AG04449 (cell line): ENCODE measurements at regions of chr9 and their contacts with region 1.

Region 1: DNA sequence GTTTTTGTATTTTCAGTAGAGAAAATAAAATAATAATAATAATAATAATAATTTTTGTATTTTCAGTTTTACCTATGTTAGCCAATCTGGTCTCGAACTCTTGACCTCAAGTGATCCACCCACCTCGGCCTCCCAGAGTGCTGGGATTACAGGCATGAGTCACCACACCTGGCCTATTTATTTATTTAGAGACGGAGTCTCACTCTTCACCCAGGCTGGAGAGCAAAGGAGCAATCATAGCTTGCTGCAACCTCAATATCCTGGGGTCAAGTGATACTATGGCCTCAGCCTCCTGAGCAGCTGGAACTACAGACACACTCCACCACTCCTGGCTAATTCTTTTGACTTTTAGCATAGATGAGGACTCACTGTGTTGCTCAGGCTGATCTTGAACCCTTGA is 167.5 kb downstream of the TLE1 start:
- DNase-seq: no peak
- H3K4me3 ChIP-seq: no peak overlapping the region
- CTCF ChIP-seq: no peak

Region 2: DNA sequence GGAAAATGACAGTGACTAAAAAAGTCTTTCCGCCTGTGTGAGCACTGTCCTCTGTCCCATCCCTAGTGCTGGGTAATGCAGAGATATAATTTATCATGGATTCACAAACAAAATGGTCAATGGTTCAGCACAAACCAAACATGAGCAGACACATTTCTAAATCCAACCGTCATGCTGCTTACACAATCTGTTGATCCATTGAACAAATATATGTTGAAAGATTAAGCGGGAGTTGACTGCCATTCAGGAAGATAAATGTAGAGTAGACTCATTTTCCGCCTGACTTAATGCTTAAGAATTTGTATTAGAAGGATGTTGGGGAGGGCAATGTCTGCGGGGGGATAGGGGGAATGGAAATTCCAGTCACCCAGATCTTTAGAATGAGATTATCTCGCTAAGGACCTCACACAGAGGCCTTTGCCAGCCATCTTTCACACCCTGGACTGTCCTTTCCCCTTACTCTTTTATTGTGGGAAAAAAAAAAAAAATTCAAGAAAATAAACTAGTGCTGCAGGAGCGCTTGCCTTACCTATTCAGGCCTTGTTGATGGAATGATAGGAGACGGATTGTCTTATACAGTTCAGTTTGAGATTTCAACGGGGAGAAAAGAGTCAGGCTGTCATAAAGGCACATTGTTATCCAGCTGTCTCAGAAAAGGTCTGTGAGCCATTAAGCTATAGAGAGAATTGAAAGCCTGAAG is 13.8 kb after region 1 on chr9:
- CTCF ChIA-PET with region 1: interaction called, 26 read pairs
- POLR2A ChIA-PET with region 1: no interaction called
- DNase-seq: no peak
- H3K4me3 ChIP-seq: no peak overlapping the region
- CTCF ChIP-seq: no peak

Region 3: DNA sequence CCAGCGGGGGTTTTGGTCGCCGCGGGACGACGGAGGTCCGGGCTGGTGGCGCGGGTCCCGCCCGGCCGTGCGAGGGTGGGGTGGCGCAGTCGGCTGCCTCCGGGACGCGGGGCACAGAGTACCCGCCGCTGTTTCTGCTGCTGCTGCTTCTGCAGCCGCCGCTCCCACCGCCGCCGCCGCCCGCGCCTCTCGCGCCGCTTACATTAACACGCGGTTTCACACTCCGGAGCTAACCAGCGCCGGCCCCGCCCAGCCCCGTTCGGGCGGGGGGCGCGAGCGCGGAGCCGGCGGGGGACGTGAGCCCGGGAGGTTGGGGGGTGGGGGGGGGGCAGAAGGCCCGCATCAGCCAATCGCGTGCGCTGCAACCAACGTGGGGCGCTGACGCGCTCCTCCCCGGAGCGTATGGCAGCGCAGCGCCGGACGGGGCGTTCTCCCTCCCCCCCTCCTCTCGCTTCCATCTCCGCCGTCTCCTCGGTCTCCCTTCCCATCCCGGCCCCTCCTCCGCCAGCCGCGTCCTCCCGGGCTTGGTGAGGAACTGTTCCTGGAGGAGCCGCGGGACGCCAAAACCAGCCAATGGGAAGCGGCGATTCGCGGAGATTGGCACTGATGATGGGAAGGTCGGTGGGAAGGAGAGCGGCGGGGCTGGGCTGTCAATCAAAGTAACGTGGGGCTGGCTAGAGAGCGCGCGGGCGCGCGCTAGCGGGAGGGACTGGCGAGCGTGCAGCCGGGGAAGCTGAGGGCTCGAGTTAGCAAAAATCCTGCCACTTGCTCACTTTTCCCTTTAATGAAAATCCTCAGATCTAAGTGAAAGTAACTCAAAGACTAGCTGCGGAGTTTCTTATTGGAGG is 167.7 kb after region 1 on chr9 and contains the start of gene TLE1:
- CTCF ChIA-PET with region 1: interaction called, 33 read pairs
- POLR2A ChIA-PET with region 1: no interaction called
- DNase-seq: peak; percentile 95
- H3K4me3 ChIP-seq: peak within 1 kb of the TSS; percentile 62
- CTCF ChIP-seq: no peak

Region 4: GRCh38 chr9:81848472-81848871 is 326.6 kb after region 1 on chr9:
- CTCF ChIA-PET with region 1: interaction called, 14 read pairs
- POLR2A ChIA-PET with region 1: no interaction called
- DNase-seq: no peak
- H3K4me3 ChIP-seq: no peak overlapping the region
- CTCF ChIP-seq: peak; percentile 37

Region 5: GRCh38 chr9:81964218-81965171 is 442.6 kb after region 1 on chr9:
- CTCF ChIA-PET with region 1: no interaction called
- POLR2A ChIA-PET with region 1: no interaction called
- DNase-seq: peak; percentile 3
- H3K4me3 ChIP-seq: no peak overlapping the region
- CTCF ChIP-seq: no peak

Region 6: DNA sequence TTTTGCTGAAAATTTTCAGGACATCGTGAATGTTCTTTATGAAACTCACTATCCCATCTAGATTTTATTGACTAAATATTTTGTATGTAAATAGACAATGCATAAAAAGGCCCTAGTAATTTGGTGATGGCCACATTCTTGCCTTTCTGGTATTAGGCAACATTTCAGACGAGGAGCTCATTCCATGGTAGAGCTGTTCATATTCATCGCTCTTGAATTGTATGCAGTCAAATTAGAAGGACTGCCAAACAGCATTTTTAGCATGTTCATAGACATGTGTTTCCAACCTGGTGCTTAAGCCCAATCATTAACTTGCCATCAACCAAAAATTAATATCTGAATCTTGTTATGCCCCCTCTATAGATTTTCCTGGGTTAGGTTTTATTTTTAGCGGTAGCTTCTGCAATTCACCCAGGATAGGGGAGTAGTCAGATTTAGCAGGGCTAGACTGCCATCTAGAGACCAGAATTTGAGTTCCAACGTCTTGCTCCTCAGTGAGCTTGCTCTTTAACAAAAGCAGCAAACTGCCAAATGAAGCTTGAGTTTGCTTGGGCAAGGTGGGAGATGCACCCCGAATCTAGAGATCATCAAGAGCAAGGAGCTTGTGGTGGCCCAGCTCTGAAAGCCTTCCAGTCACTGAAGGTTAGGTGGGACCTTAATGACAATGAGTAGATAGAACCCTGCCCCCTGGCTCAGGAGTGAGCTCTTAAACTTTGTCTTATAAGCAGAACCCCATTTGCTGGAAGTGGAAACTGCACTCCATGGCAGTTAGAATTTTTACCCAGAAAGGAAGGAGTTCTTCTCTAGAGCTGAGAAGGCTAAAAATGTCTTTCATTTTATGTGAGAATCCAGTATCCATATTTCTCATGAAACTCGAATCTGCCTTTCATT is 1084.8 kb after region 1 on chr9:
- CTCF ChIA-PET with region 1: interaction called, 37 read pairs
- POLR2A ChIA-PET with region 1: no interaction called
- DNase-seq: peak; percentile 24
- H3K4me3 ChIP-seq: no peak overlapping the region
- CTCF ChIP-seq: peak; percentile 61